Ascending aorta (tissue), 2 donors: ENCODE measurements at regions of chr2 and their contacts with region 1.

Region 1: GRCh38 chr2:61764035-61764800 is 89.6 kb downstream of the FAM161A start:
- DNase-seq: peak; percentile 90 to 99
- H3K4me3 ChIP-seq: peak overlapping the region; percentile 55 to 88
- H3K27ac ChIP-seq: peak overlapping the region; percentile 97 to 99
- H3K4me1 ChIP-seq: no peaks in the 10 kb centered on the region
- H3K27me3 ChIP-seq: no peaks in the 10 kb centered on the region
- CTCF ChIP-seq: no peak

Region 2: GRCh38 chr2:61065715-61066709 is 698.2 kb before region 1 on chr2 and contains the start of gene SANBR:
- intact Hi-C with region 1: loop called (anchors 10 kb)
- DNase-seq: peak; percentile 24 to 88
- H3K4me3 ChIP-seq: peak within 1 kb of the TSS; percentile 88 to 91
- H3K27ac ChIP-seq: peak within 1 kb of the TSS; percentile 54 to 59
- H3K4me1 ChIP-seq: no peaks in the 10 kb centered on the region
- H3K27me3 ChIP-seq: no peaks in the 10 kb centered on the region
- CTCF ChIP-seq: no peak
- total RNA-seq, gene SANBR: 10.7 TPM

Region 3: GRCh38 chr2:61470965-61471904 is 293.0 kb before region 1 on chr2 and contains the start of gene USP34:
- intact Hi-C with region 1: loop called (anchors 2 kb)
- DNase-seq: peak; percentile 65 to 96
- H3K4me3 ChIP-seq: peak within 1 kb of the TSS; percentile 89 to 96
- H3K27ac ChIP-seq: peak within 1 kb of the TSS; percentile 98 to 99
- H3K4me1 ChIP-seq: peaks cover 0 to 9% of the 10 kb centered on the region in 2 donors
- H3K27me3 ChIP-seq: no peaks in the 10 kb centered on the region
- CTCF ChIP-seq: peak in 1 of 3 experiments; percentile 9
- total RNA-seq, gene USP34: 59.3 TPM

Region 4: GRCh38 chr2:61694312-61695274 is 69.6 kb before region 1 on chr2:
- intact Hi-C with region 1: loop called (anchors 2 kb)
- DNase-seq: peak; percentile 66 to 96
- H3K4me3 ChIP-seq: peak overlapping the region; percentile 63 to 71
- H3K27ac ChIP-seq: peak overlapping the region; percentile 61 to 67
- H3K4me1 ChIP-seq: no peaks in the 10 kb centered on the region
- H3K27me3 ChIP-seq: no peaks in the 10 kb centered on the region
- CTCF ChIP-seq: peak; percentile 23 to 62 (median 33)

Region 5: DNA sequence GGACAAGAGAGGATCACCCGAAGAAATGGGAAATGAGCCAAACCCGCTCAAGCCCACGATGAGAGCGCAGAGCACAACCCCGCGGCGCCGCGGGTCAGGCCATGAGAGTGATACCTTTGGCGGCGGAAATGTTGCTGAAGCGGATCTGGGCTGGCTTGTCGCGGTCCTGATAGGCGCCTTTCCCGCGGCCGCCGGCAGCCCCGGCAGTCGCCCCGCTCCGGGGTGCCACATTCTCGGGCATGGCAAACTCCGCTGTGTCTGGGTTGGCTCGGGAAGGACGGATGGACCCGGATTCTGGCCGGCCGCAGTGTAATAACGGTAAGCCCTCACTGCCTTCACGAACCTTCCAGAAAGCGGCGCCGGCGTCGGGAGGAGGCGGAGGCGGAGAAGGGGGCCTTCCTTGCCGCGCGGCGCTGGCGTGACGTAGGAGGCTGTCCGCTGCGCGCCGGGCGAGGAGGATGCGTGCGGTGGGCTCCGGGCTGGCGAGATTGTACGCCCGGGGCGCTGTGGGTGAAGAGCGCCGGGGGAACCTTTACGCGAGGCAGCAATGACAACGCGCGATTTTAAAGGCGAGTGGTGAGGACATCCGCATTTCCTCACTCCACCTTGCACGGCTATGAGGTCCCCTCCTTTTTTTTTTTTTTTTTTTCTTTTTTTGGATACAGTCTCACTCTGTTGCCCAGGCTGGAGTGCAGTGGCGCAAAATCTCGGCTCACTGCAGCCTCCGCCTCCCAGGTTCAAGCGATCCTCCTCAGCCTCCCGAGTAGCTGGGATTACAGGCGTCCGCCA is 124.2 kb after region 1 on chr2 and contains the start of gene CCT4:
- intact Hi-C with region 1: loop called (anchors 1 kb)
- DNase-seq: peak; percentile 38 to 91
- H3K4me3 ChIP-seq: peak within 1 kb of the TSS; percentile 76 to 99
- H3K27ac ChIP-seq: peak within 1 kb of the TSS; percentile 92 to 97
- H3K4me1 ChIP-seq: peaks cover 3 to 6% of the 10 kb centered on the region in 2 donors
- H3K27me3 ChIP-seq: no peaks in the 10 kb centered on the region
- CTCF ChIP-seq: no peak
- total RNA-seq, gene CCT4: 35.3 TPM

Region 6: DNA sequence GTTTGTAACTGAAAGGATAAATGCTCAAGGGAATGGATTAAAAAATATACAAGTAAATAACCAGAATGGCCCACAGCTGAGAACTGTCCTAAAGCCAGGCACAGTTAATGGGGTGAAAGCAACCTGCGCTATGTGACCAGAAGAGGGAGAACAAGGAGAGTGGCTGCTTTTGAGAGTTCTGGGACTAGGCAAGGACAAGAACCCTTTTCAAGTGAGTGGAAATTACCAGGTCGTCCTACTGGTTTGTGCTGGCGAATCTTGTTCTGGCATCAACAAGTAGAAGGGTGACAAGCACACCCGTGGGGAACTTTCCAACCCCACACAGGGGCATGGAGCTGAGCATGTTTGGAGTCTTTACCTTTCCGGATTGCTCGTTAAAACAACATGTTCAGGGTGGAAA is 659.0 kb after region 1 on chr2:
- intact Hi-C with region 1: no loop called
- DNase-seq: peak in 1 of 2 donors; percentile 15
- H3K4me3 ChIP-seq: no peak overlapping the region
- H3K27ac ChIP-seq: no peak overlapping the region
- H3K4me1 ChIP-seq: no peaks in the 10 kb centered on the region
- H3K27me3 ChIP-seq: no peaks in the 10 kb centered on the region
- CTCF ChIP-seq: no peak

Region 7: GRCh38 chr2:62505750-62506420 is 741.7 kb after region 1 on chr2 and contains the start of gene TMEM17:
- intact Hi-C with region 1: loop called (anchors 5 kb)
- DNase-seq: peak; percentile 69 to 94
- H3K4me3 ChIP-seq: peak within 1 kb of the TSS; percentile 67 to 74
- H3K27ac ChIP-seq: peak within 1 kb of the TSS; percentile 85 to 88
- H3K4me1 ChIP-seq: peaks cover 0 to 2% of the 10 kb centered on the region in 2 donors
- H3K27me3 ChIP-seq: no peaks in the 10 kb centered on the region
- CTCF ChIP-seq: no peak
- total RNA-seq, gene TMEM17: not detected